ENCODE measurements at regions of chr5 and their contacts with region 1.

Region 1: GRCh38 chr5:53650361-53650760 is 89.9 kb downstream of the NDUFS4 start:
- DNase-seq: no peak
- ATAC-seq: no peak

Region 2: GRCh38 chr5:53590759-53591158 is 59.6 kb before region 1 on chr5:
- intact Hi-C with region 1: loop called (anchors 10 kb)
- DNase-seq: no peak
- ATAC-seq: no peak